Common myeloid progenitor, CD34-positive (primary cell): ENCODE measurements at regions of chr17 and their contacts with region 1.

Region 1: DNA sequence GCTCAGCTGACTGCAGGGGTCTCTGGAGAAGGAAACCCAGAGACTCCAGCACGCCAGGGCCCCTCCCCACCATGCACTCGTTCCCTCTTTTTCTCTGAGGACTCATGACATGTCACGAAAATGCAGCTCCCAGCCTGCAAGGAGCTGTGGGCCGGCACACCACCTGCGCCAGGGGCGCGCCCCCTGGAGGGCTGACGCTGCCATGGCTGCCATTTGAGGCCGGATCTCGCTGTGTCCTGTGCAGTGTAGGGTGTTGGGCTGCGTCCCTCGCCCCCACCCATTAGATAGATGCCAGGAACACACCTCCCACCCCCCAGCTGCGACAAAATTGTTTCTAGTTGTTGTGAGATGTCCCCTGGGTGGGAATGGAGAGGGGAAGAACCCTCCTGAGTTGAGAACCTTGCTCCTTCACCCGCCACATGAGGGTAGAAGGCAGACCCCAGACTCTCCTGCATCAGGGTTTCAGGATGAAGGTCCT is 8.2 kb downstream of the SYNGR2 start:
- DNase-seq: peak; percentile 65 to 79 (median 78)
- H3K4me3 ChIP-seq: no peak overlapping the region
- H3K27ac ChIP-seq: no peak overlapping the region
- H3K4me1 ChIP-seq: peaks cover 0 to 27% (median 22%) of the 10 kb centered on the region in 4 experiments
- H3K27me3 ChIP-seq: no peaks in the 10 kb centered on the region

Region 2: DNA sequence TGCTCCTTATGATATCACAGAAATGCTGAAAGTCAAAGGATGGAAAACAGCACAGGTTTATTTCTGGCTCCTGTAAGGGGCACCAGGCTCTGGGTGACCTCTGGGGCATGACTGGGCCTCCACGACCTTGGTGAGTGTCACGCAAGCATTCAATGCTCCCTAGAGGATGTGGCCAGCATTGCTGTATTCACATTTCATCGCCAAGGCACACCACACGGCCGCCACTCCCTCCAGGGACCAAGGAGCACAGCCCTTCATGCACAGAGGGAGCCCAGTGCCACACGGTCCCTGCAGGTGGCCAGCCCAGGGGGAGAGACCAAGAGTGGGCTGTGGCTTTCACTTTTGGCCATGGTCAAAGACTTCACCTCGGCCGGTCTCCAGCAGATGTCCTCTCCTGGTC is 355.5 kb before region 1 on chr17:
- CTCF ChIA-PET with region 1: no interaction called
- POLR2A ChIA-PET with region 1: no interaction called
- DNase-seq: peak in 1 of 3 donors; percentile 34
- H3K4me3 ChIP-seq: no peak overlapping the region
- H3K27ac ChIP-seq: no peak overlapping the region
- H3K4me1 ChIP-seq: no peaks in the 10 kb centered on the region
- H3K27me3 ChIP-seq: peaks cover 0 to 3% (median 0%) of the 10 kb centered on the region in 5 experiments

Region 3: GRCh38 chr17:78112518-78113226 is 63.9 kb before region 1 on chr17:
- CTCF ChIA-PET with region 1: interaction called, 30 read pairs
- POLR2A ChIA-PET with region 1: interaction called, 3 read pairs
- DNase-seq: peak; percentile 52 to 67 (median 61)
- H3K4me3 ChIP-seq: no peak overlapping the region
- H3K27ac ChIP-seq: no peak overlapping the region
- H3K4me1 ChIP-seq: peaks cover 0 to 8% (median 4%) of the 10 kb centered on the region in 4 experiments
- H3K27me3 ChIP-seq: no peaks in the 10 kb centered on the region

Region 4: GRCh38 chr17:78120971-78121800 is 55.4 kb before region 1 on chr17:
- CTCF ChIA-PET with region 1: interaction called, 16 read pairs
- POLR2A ChIA-PET with region 1: no interaction called
- DNase-seq: peak in 2 of 3 donors; percentile 47 to 49
- H3K4me3 ChIP-seq: peak overlapping the region in 4 of 7 experiments; percentile 28 to 59 (median 46)
- H3K27ac ChIP-seq: no peak overlapping the region
- H3K4me1 ChIP-seq: peaks cover 0 to 67% (median 59%) of the 10 kb centered on the region in 4 experiments
- H3K27me3 ChIP-seq: no peaks in the 10 kb centered on the region

Region 5: GRCh38 chr17:78128551-78129350 is 47.8 kb before region 1 on chr17 and contains the start of gene TMC6:
- CTCF ChIA-PET with region 1: interaction called, 76 read pairs
- POLR2A ChIA-PET with region 1: no interaction called
- DNase-seq: peak in 2 of 3 donors; percentile 76 to 82
- H3K4me3 ChIP-seq: peak within 1 kb of the TSS; percentile 46 to 88 (median 70)
- H3K27ac ChIP-seq: peak within 1 kb of the TSS in 1 of 2 experiments; percentile 79
- H3K4me1 ChIP-seq: peaks cover 0 to 90% (median 87%) of the 10 kb centered on the region in 4 experiments
- H3K27me3 ChIP-seq: no peaks in the 10 kb centered on the region

Region 6: GRCh38 chr17:78140169-78140976 is 36.2 kb before region 1 on chr17:
- CTCF ChIA-PET with region 1: interaction called, 76 read pairs
- POLR2A ChIA-PET with region 1: interaction called, 3 read pairs
- DNase-seq: peak; percentile 95 to 98 (median 98)
- H3K4me3 ChIP-seq: peak overlapping the region in 2 of 7 experiments; percentile 26 to 37
- H3K27ac ChIP-seq: peak overlapping the region in 1 of 2 experiments; percentile 70
- H3K4me1 ChIP-seq: peaks cover 6 to 73% (median 67%) of the 10 kb centered on the region in 4 experiments
- H3K27me3 ChIP-seq: no peaks in the 10 kb centered on the region

Region 7: GRCh38 chr17:78186692-78187595 is 10.4 kb after region 1 on chr17 and contains the starts of genes AFMID and TK1:
- CTCF ChIA-PET with region 1: interaction called, 13 read pairs
- POLR2A ChIA-PET with region 1: no interaction called
- DNase-seq: peak; percentile 94 to 96 (median 96)
- H3K4me3 ChIP-seq: peak within 1 kb of the TSS; percentile 62 to 94 (median 84)
- H3K27ac ChIP-seq: peak within 1 kb of the TSS in 1 of 2 experiments; percentile 47
- H3K4me1 ChIP-seq: peaks cover 0 to 36% (median 20%) of the 10 kb centered on the region in 4 experiments
- H3K27me3 ChIP-seq: no peaks in the 10 kb centered on the region

Region 8: GRCh38 chr17:78278139-78279127 is 101.8 kb after region 1 on chr17:
- CTCF ChIA-PET with region 1: no interaction called
- POLR2A ChIA-PET with region 1: no interaction called
- DNase-seq: peak in 1 of 3 donors; percentile 36
- H3K4me3 ChIP-seq: peak overlapping the region in 4 of 7 experiments; percentile 1 to 61 (median 24)
- H3K27ac ChIP-seq: peak overlapping the region; percentile 15 to 71
- H3K4me1 ChIP-seq: peaks cover 0 to 40% (median 31%) of the 10 kb centered on the region in 4 experiments
- H3K27me3 ChIP-seq: no peaks in the 10 kb centered on the region